ENCODE measurements at regions of chr17 and their contacts with region 1.

Region 1: DNA sequence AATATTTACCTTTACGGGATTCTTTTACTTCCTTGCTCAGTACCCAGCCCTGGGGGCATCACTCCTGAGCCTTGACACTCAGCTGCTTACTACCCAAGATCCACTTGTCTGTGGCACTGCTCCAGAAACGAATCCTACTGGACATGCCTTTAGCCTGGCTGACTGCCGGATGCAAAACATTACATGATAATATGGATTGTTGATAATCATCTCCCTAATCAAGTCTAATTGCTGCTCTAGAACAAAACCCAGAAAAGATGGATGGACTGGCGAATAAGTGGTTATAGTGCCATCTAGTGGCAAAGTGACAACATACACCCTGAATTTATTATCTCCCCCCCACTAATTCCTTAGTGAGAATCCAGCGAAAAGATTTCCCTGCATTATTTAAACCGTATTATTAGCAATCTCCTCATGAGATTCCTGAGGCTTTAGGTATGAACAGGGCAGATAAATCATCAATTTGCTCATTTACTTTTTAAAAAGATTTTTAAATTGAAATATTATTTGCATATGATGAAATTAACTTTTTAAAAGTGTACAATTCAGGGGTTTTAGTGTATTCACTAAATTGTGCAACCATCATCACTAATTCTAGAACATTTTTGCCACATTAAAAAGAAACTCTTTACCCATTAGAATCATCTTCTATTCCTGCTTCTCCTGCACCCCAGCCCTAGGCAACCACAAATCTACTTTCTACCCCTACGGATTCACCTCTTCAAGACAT is 61.6 kb downstream of the RGS9 start:
- DNase-seq: no peak
- H3K4me3 Mint-ChIP-seq: no peak overlapping the region
- H3K27ac Mint-ChIP-seq: peak overlapping the region; percentile 59
- H3K4me1 Mint-ChIP-seq: peaks cover 42% of the 10 kb centered on the region
- H3K27me3 Mint-ChIP-seq: no peaks in the 10 kb centered on the region

Region 2: DNA sequence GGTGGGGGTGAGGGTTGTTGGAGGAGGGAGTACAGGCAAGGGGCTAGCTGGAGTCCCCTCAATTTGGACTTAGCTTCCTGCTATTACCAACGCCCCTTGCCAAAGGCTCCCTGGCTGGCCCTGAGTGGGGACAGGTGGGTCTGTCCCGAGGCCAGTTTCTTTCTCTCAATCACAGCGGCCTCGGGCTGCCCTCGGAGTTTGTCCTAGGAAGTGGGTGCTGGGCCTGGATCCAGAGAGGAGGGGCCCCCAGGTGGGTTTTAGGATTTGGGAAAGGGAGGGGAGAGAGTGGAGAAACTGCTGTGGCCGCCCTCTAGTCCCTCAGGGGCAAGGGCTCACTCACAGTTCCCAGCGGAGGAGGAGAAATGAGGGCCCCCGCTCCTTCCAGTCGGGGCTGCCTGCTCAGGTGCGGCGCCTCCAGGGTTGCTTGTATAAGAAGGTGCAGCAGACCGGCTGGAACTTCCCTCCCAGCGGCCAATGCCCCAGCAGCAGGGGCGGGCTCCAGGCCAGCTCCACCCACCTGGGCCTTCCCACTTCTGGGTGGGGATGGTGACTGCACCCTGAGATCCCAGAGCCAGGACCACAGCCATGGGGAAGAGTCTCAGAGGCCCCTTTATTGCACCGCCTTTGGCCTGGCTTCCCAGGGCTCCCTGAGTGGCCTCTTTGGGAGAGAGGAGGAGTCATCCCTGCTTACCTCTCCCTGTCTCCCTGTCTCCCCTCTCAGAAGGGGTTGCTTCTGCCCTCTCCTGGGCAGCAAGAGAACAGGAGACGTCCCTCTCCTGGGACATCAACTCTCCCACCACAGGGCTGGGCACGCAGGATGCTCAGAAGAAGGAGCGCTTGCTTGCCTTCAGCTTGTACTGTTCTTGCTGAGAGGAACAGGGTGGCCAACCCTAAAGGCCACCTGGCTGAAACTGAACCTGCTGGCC is 424.7 kb before region 1 on chr17:
- intact Hi-C with region 1: loop called (anchors 10 kb)
- DNase-seq: no peak
- H3K4me3 Mint-ChIP-seq: no peak overlapping the region
- H3K27ac Mint-ChIP-seq: no peak overlapping the region
- H3K4me1 Mint-ChIP-seq: peaks cover 6% of the 10 kb centered on the region
- H3K27me3 Mint-ChIP-seq: peaks cover 4% of the 10 kb centered on the region

Region 3: DNA sequence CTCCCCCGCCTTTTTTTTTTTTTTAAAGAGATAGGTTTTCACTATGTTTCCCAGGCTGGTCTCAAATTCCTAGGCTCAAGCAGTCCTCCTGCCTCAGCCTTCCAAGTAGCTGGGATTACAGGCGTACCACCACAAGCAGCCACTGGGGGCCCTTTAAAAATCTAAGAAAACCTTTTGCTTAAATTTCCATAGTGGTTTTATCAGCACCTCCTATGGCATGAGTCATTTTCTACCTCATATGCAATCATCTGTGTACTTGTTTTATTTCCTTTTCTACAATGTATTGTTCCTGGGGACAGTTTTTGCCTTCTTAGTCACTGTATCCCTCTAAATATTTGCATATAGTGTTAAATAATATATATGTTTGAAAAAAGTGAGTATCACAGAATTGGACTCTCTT is 171.5 kb before region 1 on chr17:
- intact Hi-C with region 1: loop called (anchors 1 kb)
- DNase-seq: peak; percentile 40
- H3K4me3 Mint-ChIP-seq: peak overlapping the region; percentile 31
- H3K27ac Mint-ChIP-seq: peak overlapping the region; percentile 84
- H3K4me1 Mint-ChIP-seq: peaks cover 63% of the 10 kb centered on the region
- H3K27me3 Mint-ChIP-seq: no peaks in the 10 kb centered on the region

Region 4: DNA sequence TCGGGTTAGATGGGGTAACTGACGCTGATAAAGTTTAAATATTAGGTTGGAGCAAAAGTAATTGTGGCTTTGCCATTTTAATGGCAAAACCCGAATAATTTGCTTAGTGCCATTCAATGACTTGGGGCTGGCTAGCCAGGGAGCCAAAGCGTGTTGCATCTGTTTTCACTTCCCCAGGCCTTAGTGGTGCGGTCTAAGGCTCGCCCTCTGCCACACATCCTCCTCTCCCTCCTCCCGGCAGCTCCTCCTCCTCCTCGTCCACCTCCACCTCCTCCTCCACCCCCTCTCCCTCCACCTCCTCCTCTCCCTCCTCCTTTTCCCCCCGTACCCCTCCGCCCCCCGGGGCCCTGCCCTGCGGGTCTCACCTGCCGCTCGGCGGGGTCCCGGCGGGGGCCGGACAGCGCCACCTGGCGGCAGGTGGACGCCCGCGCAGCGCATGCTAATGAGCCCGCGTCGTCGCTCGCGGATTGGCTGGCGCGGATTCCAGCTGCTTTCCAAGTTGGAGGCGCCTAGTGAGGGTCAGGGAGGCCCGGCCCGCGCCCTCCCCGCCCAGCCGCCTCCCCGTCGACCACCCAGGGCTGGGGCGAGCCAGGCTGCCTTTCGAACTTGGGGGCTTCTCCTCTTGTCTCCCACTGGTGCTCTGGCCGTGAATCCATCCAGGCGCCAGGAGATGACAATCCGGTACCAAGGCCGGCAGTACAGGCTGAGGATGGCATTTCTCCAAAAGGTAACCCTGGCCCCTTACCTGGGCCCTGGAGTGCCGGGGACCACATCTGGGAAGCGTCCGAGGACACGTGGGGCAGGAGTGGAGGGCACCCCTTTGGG is 98.3 kb before region 1 on chr17:
- intact Hi-C with region 1: loop called (anchors 1 kb)
- DNase-seq: peak; percentile 79
- H3K4me3 Mint-ChIP-seq: peak overlapping the region; percentile 88
- H3K27ac Mint-ChIP-seq: peak overlapping the region; percentile 98
- H3K4me1 Mint-ChIP-seq: peaks cover 31% of the 10 kb centered on the region
- H3K27me3 Mint-ChIP-seq: peaks cover 5% of the 10 kb centered on the region

Region 5: GRCh38 chr17:65143889-65144604 is 54.8 kb before region 1 on chr17:
- intact Hi-C with region 1: no loop called
- DNase-seq: no peak
- H3K4me3 Mint-ChIP-seq: no peak overlapping the region
- H3K27ac Mint-ChIP-seq: no peak overlapping the region
- H3K4me1 Mint-ChIP-seq: peaks cover 31% of the 10 kb centered on the region
- H3K27me3 Mint-ChIP-seq: no peaks in the 10 kb centered on the region

Region 6: GRCh38 chr17:65181237-65182061 is 17.4 kb before region 1 on chr17:
- intact Hi-C with region 1: loop called (anchors 2 kb)
- DNase-seq: peak; percentile 55
- H3K4me3 Mint-ChIP-seq: peak overlapping the region; percentile 24
- H3K27ac Mint-ChIP-seq: peak overlapping the region; percentile 96
- H3K4me1 Mint-ChIP-seq: peaks cover 82% of the 10 kb centered on the region
- H3K27me3 Mint-ChIP-seq: no peaks in the 10 kb centered on the region

Region 7: GRCh38 chr17:65278050-65278819 is 79.4 kb after region 1 on chr17:
- intact Hi-C with region 1: no loop called
- DNase-seq: no peak
- H3K4me3 Mint-ChIP-seq: no peak overlapping the region
- H3K27ac Mint-ChIP-seq: no peak overlapping the region
- H3K4me1 Mint-ChIP-seq: peaks cover 15% of the 10 kb centered on the region
- H3K27me3 Mint-ChIP-seq: peaks cover 10% of the 10 kb centered on the region

Region 8: GRCh38 chr17:65314212-65314611 is 115.4 kb after region 1 on chr17:
- intact Hi-C with region 1: no loop called
- DNase-seq: no peak
- H3K4me3 Mint-ChIP-seq: no peak overlapping the region
- H3K27ac Mint-ChIP-seq: no peak overlapping the region
- H3K4me1 Mint-ChIP-seq: peaks cover 13% of the 10 kb centered on the region
- H3K27me3 Mint-ChIP-seq: peaks cover 52% of the 10 kb centered on the region